ENCODE measurements at regions of chr10 and their contacts with region 1.

Region 1: DNA sequence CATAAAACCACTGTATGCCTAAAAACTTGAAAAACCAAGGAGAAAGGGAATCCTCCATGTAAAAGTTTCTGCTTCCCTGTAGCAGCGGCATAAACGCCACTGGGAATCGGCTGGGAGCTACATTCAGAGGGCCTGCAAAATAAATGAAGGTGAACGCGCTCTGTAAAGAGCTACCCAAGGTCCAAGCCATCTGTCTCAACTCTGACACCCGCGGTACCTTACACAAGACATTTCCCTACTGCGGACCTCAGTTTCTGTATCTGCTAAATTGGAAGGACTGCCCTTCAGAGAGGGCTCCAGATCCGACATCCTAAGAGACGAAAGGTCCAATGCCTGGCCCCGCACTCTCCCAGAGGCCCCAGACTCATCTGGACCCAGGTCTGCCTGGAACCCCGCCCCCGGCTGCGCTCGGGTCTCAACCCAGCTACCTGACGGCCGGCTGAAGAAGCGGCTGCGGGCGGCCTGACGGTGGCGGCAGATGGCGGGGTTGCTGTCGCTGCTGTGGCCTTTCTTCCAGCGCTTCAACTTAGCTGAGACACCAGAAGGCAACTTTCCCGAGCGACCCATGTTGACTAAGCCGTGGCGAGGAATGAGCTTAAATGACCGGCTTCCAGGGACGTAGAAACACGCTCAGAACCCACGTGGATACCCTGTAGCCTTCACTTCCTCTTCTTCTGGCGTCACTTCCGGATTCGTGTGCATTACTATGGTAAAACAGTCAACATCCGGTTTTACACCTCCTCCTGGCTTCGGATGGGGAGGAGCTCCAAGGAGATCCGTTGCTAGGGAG is at the start of gene RRP12:
- DNase-seq: peak; percentile 65 to 99 (median 81)
- ATAC-seq: peak; percentile 93
- H3K4me3 ChIP-seq: peak within 1 kb of the TSS; percentile 69 to 88
- H3K4me3 Mint-ChIP-seq: peak within 1 kb of the TSS; percentile 98
- H3K27ac ChIP-seq: peak within 1 kb of the TSS; percentile 93 to 95
- H3K27ac Mint-ChIP-seq: peak within 1 kb of the TSS; percentile 96
- H3K4me1 ChIP-seq: peaks cover 14% of the 10 kb centered on the region
- H3K4me1 Mint-ChIP-seq: peaks cover 16% of the 10 kb centered on the region
- H3K27me3 ChIP-seq: no peaks in the 10 kb centered on the region
- H3K27me3 Mint-ChIP-seq: no peaks in the 10 kb centered on the region
- CTCF ChIP-seq: no peak
- total RNA-seq, gene RRP12: 104 to 107 TPM

Region 2: GRCh38 chr10:96858038-96858705 is 542.7 kb before region 1 on chr10:
- CTCF ChIA-PET with region 1: no interaction called
- POLR2A ChIA-PET with region 1: no interaction called
- intact Hi-C with region 1: no loop called
- DNase-seq: no peak
- ATAC-seq: no peak
- H3K4me3 ChIP-seq: no peak overlapping the region
- H3K4me3 Mint-ChIP-seq: no peak overlapping the region
- H3K27ac ChIP-seq: no peak overlapping the region
- H3K27ac Mint-ChIP-seq: no peak overlapping the region
- H3K4me1 ChIP-seq: peaks cover 10% of the 10 kb centered on the region
- H3K4me1 Mint-ChIP-seq: peaks cover 73% of the 10 kb centered on the region
- H3K27me3 ChIP-seq: no peaks in the 10 kb centered on the region
- H3K27me3 Mint-ChIP-seq: no peaks in the 10 kb centered on the region
- CTCF ChIP-seq: no peak

Region 3: DNA sequence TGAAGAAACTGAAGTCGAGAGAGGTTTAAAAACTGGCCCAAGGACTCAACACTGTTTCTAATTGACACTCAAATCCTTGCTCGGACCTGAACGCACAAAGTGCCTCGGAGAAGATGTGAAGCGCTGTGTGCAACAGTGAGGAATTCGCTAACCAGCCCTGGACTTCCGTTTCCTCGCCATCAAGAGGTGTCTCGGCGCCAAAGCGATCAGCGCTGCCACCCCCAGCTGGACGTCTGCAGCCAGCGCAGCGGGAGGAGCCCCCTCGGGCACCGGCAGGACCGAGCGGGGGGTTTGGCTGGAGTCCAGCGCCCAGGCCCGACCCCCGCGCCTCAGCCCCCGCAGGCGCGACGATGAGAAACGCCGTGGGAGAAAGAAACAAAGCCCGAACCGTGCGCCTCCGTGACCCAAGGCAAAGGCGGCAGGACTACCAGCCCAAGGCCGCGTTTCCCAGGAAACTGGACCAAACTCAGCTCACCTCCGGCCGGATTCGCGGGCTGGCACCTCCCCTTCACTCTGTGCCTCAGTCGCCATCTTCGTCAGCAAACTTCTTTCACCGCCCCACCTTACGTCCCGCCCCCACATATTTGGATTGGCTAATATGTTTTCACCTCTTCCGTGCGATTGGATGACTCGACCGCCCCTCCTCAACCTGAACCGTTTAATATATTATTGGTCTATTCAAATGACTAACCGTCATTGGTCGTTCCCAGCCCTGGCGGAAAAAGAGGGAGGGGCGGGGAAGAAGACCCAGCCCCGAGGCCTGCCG is 108.6 kb before region 1 on chr10 and contains the start of gene ARHGAP19:
- CTCF ChIA-PET with region 1: no interaction called
- POLR2A ChIA-PET with region 1: no interaction called
- intact Hi-C with region 1: loop called (anchors 1 to 5 kb)
- DNase-seq: peak; percentile 86 to 98 (median 91)
- ATAC-seq: peak; percentile 99
- H3K4me3 ChIP-seq: peak within 1 kb of the TSS; percentile 82 to 93
- H3K4me3 Mint-ChIP-seq: peak within 1 kb of the TSS; percentile 94
- H3K27ac ChIP-seq: peak within 1 kb of the TSS; percentile 73 to 75
- H3K27ac Mint-ChIP-seq: peak within 1 kb of the TSS; percentile 86
- H3K4me1 ChIP-seq: peaks cover 6% of the 10 kb centered on the region
- H3K4me1 Mint-ChIP-seq: peaks cover 20% of the 10 kb centered on the region
- H3K27me3 ChIP-seq: no peaks in the 10 kb centered on the region
- H3K27me3 Mint-ChIP-seq: no peaks in the 10 kb centered on the region
- CTCF ChIP-seq: no peak
- total RNA-seq, gene ARHGAP19: 5.7 to 6.4 TPM

Region 4: GRCh38 chr10:97334370-97335175 is 66.3 kb before region 1 on chr10 and contains the start of gene FRAT2:
- CTCF ChIA-PET with region 1: interaction called, 3 read pairs
- POLR2A ChIA-PET with region 1: interaction called, 6 read pairs
- intact Hi-C with region 1: loop called (anchors 1 to 5 kb)
- DNase-seq: peak; percentile 80 to 95 (median 87)
- ATAC-seq: peak; percentile 89
- H3K4me3 ChIP-seq: peak within 1 kb of the TSS; percentile 61 to 92
- H3K4me3 Mint-ChIP-seq: peak within 1 kb of the TSS; percentile 97
- H3K27ac ChIP-seq: peak within 1 kb of the TSS; percentile 99
- H3K27ac Mint-ChIP-seq: peak within 1 kb of the TSS; percentile 96
- H3K4me1 ChIP-seq: peaks cover 34% of the 10 kb centered on the region
- H3K4me1 Mint-ChIP-seq: peaks cover 39% of the 10 kb centered on the region
- H3K27me3 ChIP-seq: no peaks in the 10 kb centered on the region
- H3K27me3 Mint-ChIP-seq: no peaks in the 10 kb centered on the region
- CTCF ChIP-seq: no peak
- total RNA-seq, gene FRAT2: 20.8 to 22.3 TPM

Region 5: GRCh38 chr10:97445722-97446639 is 45.1 kb after region 1 on chr10 and contains the starts of genes EXOSC1 and ZDHHC16:
- CTCF ChIA-PET with region 1: no interaction called
- POLR2A ChIA-PET with region 1: no interaction called
- intact Hi-C with region 1: loop called (anchors 1 kb)
- DNase-seq: peak; percentile 73 to 95 (median 89)
- ATAC-seq: peak; percentile 97
- H3K4me3 ChIP-seq: peak within 1 kb of the TSS; percentile 89 to 95
- H3K4me3 Mint-ChIP-seq: peak within 1 kb of the TSS; percentile 99
- H3K27ac ChIP-seq: peak within 1 kb of the TSS; percentile 69 to 75
- H3K27ac Mint-ChIP-seq: peak within 1 kb of the TSS; percentile 94
- H3K4me1 ChIP-seq: peaks cover 24% of the 10 kb centered on the region
- H3K4me1 Mint-ChIP-seq: peaks cover 47% of the 10 kb centered on the region
- H3K27me3 ChIP-seq: no peaks in the 10 kb centered on the region
- H3K27me3 Mint-ChIP-seq: no peaks in the 10 kb centered on the region
- CTCF ChIP-seq: no peak
- total RNA-seq, gene EXOSC1: 30.2 to 30.4 TPM
- total RNA-seq, gene ZDHHC16: 4.7 to 6.2 TPM

Region 6: GRCh38 chr10:97640174-97640867 is 239.5 kb after region 1 on chr10 and contains the start of gene PI4K2A:
- CTCF ChIA-PET with region 1: no interaction called
- POLR2A ChIA-PET with region 1: no interaction called
- intact Hi-C with region 1: loop called in 1 of 2 experiments (anchors 2 kb)
- DNase-seq: peak; percentile 97 to 100 (median 98)
- ATAC-seq: peak; percentile 97
- H3K4me3 ChIP-seq: peak within 1 kb of the TSS; percentile 58 to 84
- H3K4me3 Mint-ChIP-seq: peak within 1 kb of the TSS; percentile 95
- H3K27ac ChIP-seq: peak within 1 kb of the TSS; percentile 54 to 55
- H3K27ac Mint-ChIP-seq: peak within 1 kb of the TSS; percentile 90
- H3K4me1 ChIP-seq: peaks cover 10% of the 10 kb centered on the region
- H3K4me1 Mint-ChIP-seq: peaks cover 24% of the 10 kb centered on the region
- H3K27me3 ChIP-seq: no peaks in the 10 kb centered on the region
- H3K27me3 Mint-ChIP-seq: no peaks in the 10 kb centered on the region
- CTCF ChIP-seq: no peak
- total RNA-seq, gene PI4K2A: 37.6 to 37.7 TPM

Region 7: GRCh38 chr10:97898429-97898828 is 497.6 kb after region 1 on chr10:
- CTCF ChIA-PET with region 1: no interaction called
- POLR2A ChIA-PET with region 1: no interaction called
- intact Hi-C with region 1: no loop called
- DNase-seq: no peak
- ATAC-seq: no peak
- H3K4me3 ChIP-seq: no peak overlapping the region
- H3K4me3 Mint-ChIP-seq: no peak overlapping the region
- H3K27ac ChIP-seq: no peak overlapping the region
- H3K27ac Mint-ChIP-seq: no peak overlapping the region
- H3K4me1 ChIP-seq: no peaks in the 10 kb centered on the region
- H3K4me1 Mint-ChIP-seq: no peaks in the 10 kb centered on the region
- H3K27me3 ChIP-seq: no peaks in the 10 kb centered on the region
- H3K27me3 Mint-ChIP-seq: peaks cover 18% of the 10 kb centered on the region
- CTCF ChIP-seq: no peak